GM12878 (cell line): ENCODE measurements at regions of chr9 and their contacts with region 1.

Region 1: DNA sequence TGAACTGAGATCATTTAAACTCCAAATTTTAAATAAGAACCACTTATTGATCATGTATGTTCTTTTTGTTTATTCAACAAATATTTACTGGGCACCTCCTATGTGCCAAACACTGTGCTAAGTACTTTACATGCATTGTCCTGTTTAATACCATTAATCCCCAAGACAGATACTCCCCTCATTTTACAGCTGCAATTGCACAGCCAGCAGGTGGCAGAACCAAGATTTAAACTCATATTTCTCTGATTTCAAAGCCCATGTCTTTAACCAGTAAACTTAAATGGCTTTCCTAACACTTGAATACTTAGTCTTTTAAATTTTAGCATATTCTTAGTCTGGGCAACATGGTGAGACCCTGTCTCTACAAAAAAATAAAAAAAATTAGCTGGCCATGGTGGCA is 43.4 kb upstream of the KIAA1958 start:
- DNase-seq: no peak
- ATAC-seq: peak; percentile 61
- H3K4me3 ChIP-seq: no peak overlapping the region
- H3K27ac ChIP-seq: no peak overlapping the region
- H3K4me1 ChIP-seq: peaks cover 4% of the 10 kb centered on the region; the same call in 1 of the 2 replicates
- H3K27me3 ChIP-seq: no peaks in the 10 kb centered on the region
- CTCF ChIP-seq: peak; percentile 57 to 58 (median 58)
- EP300 ChIP-seq: no peak
- POLR2A ChIP-seq: no peak
- RAD21 ChIP-seq: peak; percentile 55

Region 2: DNA sequence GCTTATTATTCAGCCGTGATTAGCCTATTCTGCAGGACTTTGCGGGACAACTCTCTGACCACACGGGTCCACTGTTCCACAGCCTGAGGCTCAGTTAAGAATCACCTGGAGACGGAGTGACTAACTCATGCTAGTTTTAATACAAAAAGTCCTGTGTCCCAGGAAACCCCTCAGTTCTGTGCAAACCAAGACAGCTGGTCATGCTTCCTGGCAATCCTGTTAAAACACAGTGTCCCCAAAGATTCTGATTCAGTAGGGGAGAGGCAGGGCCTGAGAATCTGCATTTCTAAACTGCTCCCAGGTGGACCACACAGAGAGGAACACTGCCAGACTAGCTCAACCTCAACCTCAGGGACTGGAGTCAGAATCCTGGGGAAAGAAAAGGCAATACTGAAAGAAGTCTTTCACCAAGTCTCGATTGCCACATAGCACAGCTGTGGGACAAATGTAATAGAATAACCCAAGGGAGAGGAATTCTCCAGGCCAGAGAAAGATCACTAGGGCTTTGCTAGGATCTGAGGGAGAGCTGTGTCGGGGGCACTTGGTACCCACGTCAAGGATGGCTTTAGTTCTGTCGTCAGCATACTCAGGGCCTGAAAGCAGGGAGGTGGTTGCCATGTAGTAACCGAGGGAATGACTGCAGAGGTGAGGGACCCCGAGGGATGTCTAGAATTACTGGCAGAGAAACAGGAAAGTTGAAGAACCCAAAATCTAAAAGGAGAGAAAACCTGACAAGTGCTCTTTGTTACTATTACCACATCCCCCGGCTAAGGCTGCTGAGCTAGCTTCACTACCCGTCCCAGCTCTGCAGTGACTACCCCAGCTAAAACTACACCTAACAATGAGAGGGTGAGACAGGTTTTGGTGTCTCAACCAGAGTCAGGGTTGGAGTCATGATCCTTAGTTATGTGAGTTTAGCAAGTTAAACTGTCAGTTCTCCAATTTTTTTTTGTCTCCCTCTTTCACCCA is 276.7 kb before region 1 on chr9:
- CTCF ChIA-PET with region 1: no interaction called
- POLR2A ChIA-PET with region 1: no interaction called
- RAD21 ChIA-PET with region 1: no interaction called
- SMC1A ChIA-PET with region 1: no interaction called
- in situ Hi-C with region 1: no loop called
- intact Hi-C with region 1: no loop called
- DNase-seq: no peak
- ATAC-seq: no peak
- H3K4me3 ChIP-seq: no peak overlapping the region
- H3K27ac ChIP-seq: no peak overlapping the region
- H3K4me1 ChIP-seq: peaks cover 8% of the 10 kb centered on the region
- H3K27me3 ChIP-seq: no peaks in the 10 kb centered on the region
- CTCF ChIP-seq: no peak
- EP300 ChIP-seq: no peak
- POLR2A ChIP-seq: no peak
- RAD21 ChIP-seq: no peak

Region 3: GRCh38 chr9:112665347-112665746 is 222.1 kb after region 1 on chr9:
- CTCF ChIA-PET with region 1: interaction called, 14 read pairs
- POLR2A ChIA-PET with region 1: no interaction called
- RAD21 ChIA-PET with region 1: no interaction called
- SMC1A ChIA-PET with region 1: interaction called, 3 read pairs
- in situ Hi-C with region 1: no loop called
- intact Hi-C with region 1: loop called (anchors 1 kb)
- DNase-seq: no peak
- ATAC-seq: no peak
- H3K4me3 ChIP-seq: no peak overlapping the region
- H3K27ac ChIP-seq: no peak overlapping the region
- H3K4me1 ChIP-seq: no peaks in the 10 kb centered on the region
- H3K27me3 ChIP-seq: no peaks in the 10 kb centered on the region
- CTCF ChIP-seq: peak; percentile 25 to 43 (median 36); a peak in 3 of 6 replicates
- EP300 ChIP-seq: no peak
- POLR2A ChIP-seq: no peak
- RAD21 ChIP-seq: peak; percentile 57

Region 4: DNA sequence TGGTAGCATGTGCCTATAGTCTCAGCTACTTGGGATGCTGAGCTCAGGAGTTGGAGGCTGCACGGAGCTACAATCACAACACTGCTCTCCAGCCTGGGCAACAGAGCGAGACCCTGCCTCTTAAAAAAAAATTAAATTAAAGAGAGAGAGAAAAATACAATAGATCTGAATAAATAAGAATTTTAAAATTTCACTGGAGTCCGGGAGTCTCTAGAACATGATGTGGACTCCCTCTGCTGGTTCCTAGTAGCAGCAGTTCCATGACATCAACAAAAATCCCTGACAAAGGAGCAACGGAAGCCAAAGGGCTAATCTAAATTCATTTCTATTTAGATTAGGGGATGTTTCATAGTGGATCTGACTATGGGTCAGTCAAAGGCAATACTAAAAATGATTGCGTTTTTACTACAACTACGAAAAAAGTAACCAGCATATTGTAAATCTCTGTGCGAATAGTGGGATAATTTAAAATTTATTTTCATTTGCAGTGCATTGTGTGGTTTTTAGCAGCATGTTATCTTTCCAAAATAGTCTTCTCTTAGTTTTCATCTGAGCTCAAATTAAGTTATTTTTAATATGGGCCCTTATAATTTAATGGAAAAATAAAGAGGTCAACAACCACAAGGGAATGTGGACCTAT is 268.0 kb after region 1 on chr9:
- CTCF ChIA-PET with region 1: interaction called, 12 read pairs
- POLR2A ChIA-PET with region 1: no interaction called
- RAD21 ChIA-PET with region 1: interaction called, 15 read pairs
- SMC1A ChIA-PET with region 1: interaction called, 5 read pairs
- in situ Hi-C with region 1: no loop called
- intact Hi-C with region 1: loop called (anchors 5 kb)
- DNase-seq: no peak
- ATAC-seq: no peak
- H3K4me3 ChIP-seq: no peak overlapping the region
- H3K27ac ChIP-seq: no peak overlapping the region
- H3K4me1 ChIP-seq: no peaks in the 10 kb centered on the region; the same call in 1 of the 2 replicates
- H3K27me3 ChIP-seq: no peaks in the 10 kb centered on the region
- CTCF ChIP-seq: peak; percentile 30 to 37 (median 31); a peak in 3 of 6 replicates
- EP300 ChIP-seq: no peak
- POLR2A ChIP-seq: no peak
- RAD21 ChIP-seq: peak; percentile 54

Region 5: DNA sequence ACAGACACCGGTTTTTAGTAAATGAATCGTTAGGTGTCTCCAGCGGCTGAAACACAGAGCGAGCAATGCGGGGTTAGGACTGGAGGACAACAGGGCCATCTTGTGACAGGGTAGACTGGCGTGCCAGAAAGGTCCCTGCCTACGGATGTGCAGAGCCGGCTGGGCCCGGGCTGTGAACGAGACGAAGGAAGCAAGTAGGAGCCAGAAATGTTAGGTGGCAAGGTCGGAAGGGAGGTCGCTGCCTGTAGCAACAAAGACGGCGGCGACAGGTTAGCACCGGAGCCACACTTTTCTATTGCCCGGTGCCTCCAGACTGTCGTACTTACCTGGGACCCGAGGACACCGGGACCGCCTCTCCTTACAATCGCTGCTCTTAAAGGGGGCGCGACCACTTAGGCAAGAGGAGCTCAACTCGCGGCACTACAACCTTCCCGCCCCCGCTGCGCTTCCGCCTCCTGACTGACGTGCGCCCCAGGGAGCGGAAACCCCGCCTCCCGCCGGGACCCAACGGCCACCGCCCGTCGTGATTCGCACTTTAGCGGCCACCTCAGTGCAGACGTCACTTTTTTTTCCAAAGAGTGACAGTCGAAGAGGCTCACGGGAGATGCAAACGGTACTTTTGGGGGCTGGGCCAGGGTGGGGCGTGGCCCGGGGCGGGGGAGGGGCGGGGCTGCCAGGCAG is 274.6 kb after region 1 on chr9 and contains the start of gene INIP:
- CTCF ChIA-PET with region 1: interaction called, 20 read pairs
- POLR2A ChIA-PET with region 1: no interaction called
- RAD21 ChIA-PET with region 1: interaction called, 15 read pairs
- SMC1A ChIA-PET with region 1: interaction called, 10 read pairs
- in situ Hi-C with region 1: no loop called
- intact Hi-C with region 1: loop called (anchors 5 kb)
- DNase-seq: peak; percentile 87
- ATAC-seq: peak; percentile 94
- H3K4me3 ChIP-seq: peak within 1 kb of the TSS; percentile 82
- H3K27ac ChIP-seq: peak within 1 kb of the TSS; percentile 69
- H3K4me1 ChIP-seq: peaks cover 17% of the 10 kb centered on the region
- H3K27me3 ChIP-seq: no peaks in the 10 kb centered on the region
- CTCF ChIP-seq: peak; percentile 26 to 54 (median 26); a peak in 4 of 6 replicates
- EP300 ChIP-seq: no peak
- POLR2A ChIP-seq: peak; percentile 93
- RAD21 ChIP-seq: peak; percentile 55
- polyA plus RNA-seq, gene INIP: 61.2 to 66.5 TPM

Region 6: GRCh38 chr9:112819635-112820496 is 376.7 kb after region 1 on chr9:
- CTCF ChIA-PET with region 1: interaction called, 23 read pairs
- POLR2A ChIA-PET with region 1: no interaction called
- RAD21 ChIA-PET with region 1: interaction called, 8 read pairs
- SMC1A ChIA-PET with region 1: interaction called, 13 read pairs
- in situ Hi-C with region 1: no loop called
- intact Hi-C with region 1: loop called (anchors 1 kb)
- DNase-seq: peak; percentile 26
- ATAC-seq: peak; percentile 96
- H3K4me3 ChIP-seq: no peak overlapping the region
- H3K27ac ChIP-seq: no peak overlapping the region
- H3K4me1 ChIP-seq: peaks cover 13% of the 10 kb centered on the region
- H3K27me3 ChIP-seq: no peaks in the 10 kb centered on the region; a peak in 2 of 4 replicates
- CTCF ChIP-seq: peak; percentile 69 to 76 (median 76)
- EP300 ChIP-seq: no peak
- POLR2A ChIP-seq: no peak
- RAD21 ChIP-seq: peak; percentile 85

Region 7: DNA sequence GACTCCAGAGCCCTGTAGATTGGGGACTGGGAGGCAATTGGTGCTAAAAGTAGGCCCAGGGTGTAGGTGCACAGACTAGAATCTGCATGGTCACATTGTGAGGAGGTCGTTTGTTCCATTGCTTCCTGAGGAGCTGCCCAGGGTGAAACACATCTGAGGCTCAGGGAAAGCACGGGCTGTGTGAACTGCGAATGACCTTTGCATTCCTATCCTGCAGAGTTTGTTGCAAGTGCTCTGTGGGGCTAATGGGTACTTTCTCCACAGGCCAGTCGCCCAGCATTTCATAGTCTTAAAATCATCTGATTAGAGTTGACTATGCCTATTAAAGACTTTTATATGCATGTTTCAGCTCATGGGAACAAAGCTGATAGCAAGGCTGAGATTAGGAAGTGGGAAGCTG is 461.9 kb after region 1 on chr9:
- CTCF ChIA-PET with region 1: interaction called, 4 read pairs
- POLR2A ChIA-PET with region 1: no interaction called
- RAD21 ChIA-PET with region 1: no interaction called
- SMC1A ChIA-PET with region 1: no interaction called
- in situ Hi-C with region 1: no loop called
- intact Hi-C with region 1: loop called (anchors 10 kb)
- DNase-seq: no peak
- ATAC-seq: no peak
- H3K4me3 ChIP-seq: no peak overlapping the region
- H3K27ac ChIP-seq: no peak overlapping the region
- H3K4me1 ChIP-seq: no peaks in the 10 kb centered on the region
- H3K27me3 ChIP-seq: no peaks in the 10 kb centered on the region
- CTCF ChIP-seq: no peak
- EP300 ChIP-seq: no peak
- POLR2A ChIP-seq: no peak
- RAD21 ChIP-seq: no peak